Psoas muscle (tissue), 8 donors: ENCODE measurements at regions of chr1 and their contacts with region 1.

Region 1: GRCh38 chr1:116345843-116346242 is 27.2 kb upstream of the ATP1A1 start:
- DNase-seq: no peak
- ATAC-seq: no peak
- H3K4me3 ChIP-seq: no peak overlapping the region
- H3K27ac ChIP-seq: no peak overlapping the region
- H3K4me1 ChIP-seq: peaks cover 20% of the 10 kb centered on the region
- H3K27me3 ChIP-seq: no peaks in the 10 kb centered on the region
- CTCF ChIP-seq: no peak

Region 2: GRCh38 chr1:116288201-116288761 is 57.6 kb before region 1 on chr1:
- intact Hi-C with region 1: loop called in 1 of 2 experiments (anchors 5 kb)
- DNase-seq: no peak
- ATAC-seq: no peak
- H3K4me3 ChIP-seq: no peak overlapping the region
- H3K27ac ChIP-seq: no peak overlapping the region
- H3K4me1 ChIP-seq: peaks cover 15% of the 10 kb centered on the region
- H3K27me3 ChIP-seq: no peaks in the 10 kb centered on the region
- CTCF ChIP-seq: no peak

Region 3: GRCh38 chr1:116485071-116485735 is 139.4 kb after region 1 on chr1:
- intact Hi-C with region 1: no loop called
- DNase-seq: peak; percentile 88 to 95
- ATAC-seq: peak; percentile 83 to 93 (median 87)
- H3K4me3 ChIP-seq: no peak overlapping the region
- H3K27ac ChIP-seq: no peak overlapping the region
- H3K4me1 ChIP-seq: peaks cover 14% of the 10 kb centered on the region
- H3K27me3 ChIP-seq: no peaks in the 10 kb centered on the region
- CTCF ChIP-seq: peak; percentile 96